GM12878 (cell line): ENCODE measurements at regions of chr4 and their contacts with region 1.

Region 1: GRCh38 chr4:7186061-7186461 is 6.3 kb upstream of the SORCS2 start:
- DNase-seq: no peak
- ATAC-seq: peak; percentile 76
- H3K4me3 ChIP-seq: no peak overlapping the region
- H3K27ac ChIP-seq: no peak overlapping the region
- H3K4me1 ChIP-seq: no peaks in the 10 kb centered on the region
- H3K27me3 ChIP-seq: peaks cover 0 to 2% of the 10 kb centered on the region in 2 experiments; a peak in 2 of 4 replicates
- CTCF ChIP-seq: peak; percentile 10 to 36 (median 32); a peak in 4 of 6 replicates
- EP300 ChIP-seq: no peak
- POLR2A ChIP-seq: no peak
- RAD21 ChIP-seq: no peak

Region 2: GRCh38 chr4:7196736-7197135 is 10.7 kb after region 1 on chr4:
- CTCF ChIA-PET with region 1: no interaction called
- POLR2A ChIA-PET with region 1: no interaction called
- RAD21 ChIA-PET with region 1: no interaction called
- SMC1A ChIA-PET with region 1: no interaction called
- in situ Hi-C with region 1: no loop called
- intact Hi-C with region 1: no loop called
- DNase-seq: no peak
- ATAC-seq: no peak
- H3K4me3 ChIP-seq: no peak overlapping the region
- H3K27ac ChIP-seq: no peak overlapping the region
- H3K4me1 ChIP-seq: no peaks in the 10 kb centered on the region
- H3K27me3 ChIP-seq: peaks cover 2 to 4% of the 10 kb centered on the region in 2 experiments; a peak in 3 of 4 replicates
- CTCF ChIP-seq: no peak
- EP300 ChIP-seq: no peak
- POLR2A ChIP-seq: no peak
- RAD21 ChIP-seq: no peak

Region 3: DNA sequence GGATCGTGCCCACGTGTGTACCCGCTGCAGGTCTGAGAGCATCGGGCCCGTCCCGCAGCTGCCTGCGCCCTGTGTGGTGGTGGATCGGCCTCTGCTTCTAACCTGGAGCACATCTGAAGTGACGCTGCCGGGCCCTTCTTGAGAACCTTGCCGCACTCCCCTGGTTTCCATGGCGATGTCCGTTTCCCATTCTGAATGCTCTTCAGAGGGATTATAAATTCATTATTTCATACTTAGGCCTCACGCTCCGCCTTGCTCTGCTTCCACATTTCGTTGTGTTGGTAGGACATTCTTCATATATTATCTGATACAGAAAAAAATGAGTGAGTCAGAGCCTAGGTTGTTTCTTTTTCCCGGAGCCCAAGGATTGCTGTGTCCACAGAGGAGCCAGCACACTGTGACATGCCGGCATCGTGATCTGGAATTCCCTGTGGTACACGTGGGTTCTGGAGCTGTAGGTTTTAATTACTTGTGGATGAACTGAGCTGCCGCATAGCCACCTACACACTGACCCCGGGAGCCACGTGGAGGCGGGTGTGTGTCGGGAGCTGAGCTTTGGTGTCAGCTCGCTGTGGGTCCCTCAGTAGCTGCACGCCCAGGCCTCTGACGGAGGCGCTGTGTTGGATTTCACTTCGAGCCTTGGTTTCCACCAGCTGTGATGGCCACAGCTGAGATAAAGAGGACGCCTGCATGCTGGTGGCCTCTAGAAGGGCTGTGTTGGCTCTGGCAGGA is 185.3 kb after region 1 on chr4:
- CTCF ChIA-PET with region 1: no interaction called
- POLR2A ChIA-PET with region 1: no interaction called
- RAD21 ChIA-PET with region 1: no interaction called
- SMC1A ChIA-PET with region 1: no interaction called
- in situ Hi-C with region 1: no loop called
- intact Hi-C with region 1: no loop called
- DNase-seq: no peak
- ATAC-seq: no peak
- H3K4me3 ChIP-seq: no peak overlapping the region
- H3K27ac ChIP-seq: no peak overlapping the region
- H3K4me1 ChIP-seq: no peaks in the 10 kb centered on the region
- H3K27me3 ChIP-seq: no peaks in the 10 kb centered on the region; a peak in 1 of 4 replicates
- CTCF ChIP-seq: no peak
- EP300 ChIP-seq: no peak
- POLR2A ChIP-seq: no peak
- RAD21 ChIP-seq: no peak

Region 4: GRCh38 chr4:7719354-7720174 is 533.5 kb after region 1 on chr4:
- CTCF ChIA-PET with region 1: no interaction called
- POLR2A ChIA-PET with region 1: no interaction called
- RAD21 ChIA-PET with region 1: interaction called, 3 read pairs
- SMC1A ChIA-PET with region 1: no interaction called
- in situ Hi-C with region 1: loop called (anchors 10 kb)
- intact Hi-C with region 1: loop called (anchors 10 kb)
- DNase-seq: no peak
- ATAC-seq: peak; percentile 86
- H3K4me3 ChIP-seq: no peak overlapping the region
- H3K27ac ChIP-seq: no peak overlapping the region
- H3K4me1 ChIP-seq: no peaks in the 10 kb centered on the region
- H3K27me3 ChIP-seq: peaks cover 0 to 4% of the 10 kb centered on the region in 2 experiments; a peak in 2 of 4 replicates
- CTCF ChIP-seq: peak; percentile 58 to 74 (median 64)
- EP300 ChIP-seq: no peak
- POLR2A ChIP-seq: no peak
- RAD21 ChIP-seq: peak; percentile 50